Endothelial cell of umbilical vein (primary cell): ENCODE measurements at regions of chr6 and their contacts with region 1.

Region 1: GRCh38 chr6:73675466-73676098 is 20.4 kb upstream of the CD109 start:
- DNase-seq: peak; percentile 85
- H3K4me3 ChIP-seq: no peak overlapping the region
- H3K27ac ChIP-seq: no peak overlapping the region
- H3K4me1 ChIP-seq: peaks cover 3% of the 10 kb centered on the region
- H3K27me3 ChIP-seq: no peaks in the 10 kb centered on the region
- CTCF ChIP-seq: peak; percentile 82 to 84
- POLR2A ChIP-seq: no peak

Region 2: DNA sequence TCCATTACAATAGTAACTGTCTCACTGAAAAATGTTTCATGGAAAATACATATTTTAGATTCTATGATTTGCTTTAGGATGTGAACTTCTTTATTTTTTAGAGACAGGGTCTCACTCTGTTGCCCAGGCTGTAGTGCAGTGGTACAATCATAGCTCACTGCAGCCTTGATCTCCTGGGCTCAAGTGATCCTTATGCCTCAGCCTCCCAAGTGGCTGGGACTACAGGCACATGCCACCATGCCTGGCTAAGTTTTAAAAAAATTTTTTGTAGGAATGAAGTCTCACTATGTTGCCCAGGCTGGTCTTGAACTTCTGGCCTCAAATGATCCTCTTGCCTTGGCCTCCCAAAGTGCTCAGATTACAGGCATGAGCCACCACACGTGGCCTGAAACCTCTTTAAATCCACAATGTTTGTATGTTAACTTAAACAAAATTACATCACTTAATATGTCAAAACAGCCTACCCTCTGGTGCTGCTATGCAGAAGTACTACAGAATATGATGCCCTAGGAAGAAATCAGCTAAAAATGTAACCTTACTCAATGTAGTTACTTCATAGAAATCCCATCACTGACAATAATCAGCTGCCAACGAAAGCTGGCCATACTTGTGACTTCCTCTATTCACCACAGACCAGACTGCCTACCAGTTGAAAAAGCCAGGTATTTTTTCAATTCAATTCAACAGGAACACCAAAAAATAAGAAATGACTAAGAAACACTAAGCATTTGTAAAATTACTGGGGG is 172.4 kb before region 1 on chr6:
- CTCF ChIA-PET with region 1: no interaction called
- POLR2A ChIA-PET with region 1: no interaction called
- dilution Hi-C with region 1: no loop called
- intact Hi-C with region 1: no loop called
- DNase-seq: no peak
- H3K4me3 ChIP-seq: no peak overlapping the region
- H3K27ac ChIP-seq: no peak overlapping the region
- H3K4me1 ChIP-seq: no peaks in the 10 kb centered on the region
- H3K27me3 ChIP-seq: no peaks in the 10 kb centered on the region
- CTCF ChIP-seq: no peak
- POLR2A ChIP-seq: no peak

Region 3: DNA sequence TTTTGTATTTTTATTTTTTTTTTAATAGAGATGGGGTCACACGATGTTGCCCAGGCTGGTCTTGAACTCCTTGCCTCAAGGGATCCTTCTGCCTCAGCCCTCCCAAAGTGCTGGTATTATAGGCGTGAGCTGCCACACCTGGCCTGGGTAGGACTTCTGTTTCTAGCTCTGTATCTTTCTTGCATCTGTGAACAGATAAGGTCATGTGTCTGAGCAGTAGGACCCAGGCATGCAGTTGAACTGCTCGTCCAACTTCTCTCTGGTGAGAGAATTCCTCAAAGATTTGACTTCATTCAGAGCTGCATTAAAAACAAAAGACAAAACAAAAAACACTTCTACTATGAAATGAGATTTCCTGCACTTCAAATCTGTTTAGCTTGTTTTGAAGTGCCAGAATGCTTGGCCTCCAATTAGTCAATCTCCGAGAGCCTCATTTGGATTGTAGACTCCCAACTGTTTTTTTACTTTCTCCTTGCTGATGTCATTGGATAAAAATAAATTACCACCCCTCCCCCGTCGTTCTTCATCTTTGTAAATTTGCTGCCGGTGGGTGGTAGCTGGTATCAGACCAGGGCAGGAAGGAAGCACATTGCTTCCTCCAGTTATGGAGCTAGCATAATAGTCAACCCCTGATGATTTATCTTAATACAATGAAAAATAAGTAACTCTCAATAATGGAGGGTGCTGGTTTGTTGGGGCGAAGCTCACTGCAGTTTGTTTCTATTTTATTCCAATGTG is 38.0 kb after region 1 on chr6:
- CTCF ChIA-PET with region 1: interaction called, 13 read pairs
- POLR2A ChIA-PET with region 1: no interaction called
- dilution Hi-C with region 1: no loop called
- intact Hi-C with region 1: loop called (anchors 1 kb)
- DNase-seq: peak; percentile 98
- H3K4me3 ChIP-seq: peak overlapping the region in 1 of 3 experiments; percentile 30
- H3K27ac ChIP-seq: peak overlapping the region; percentile 95
- H3K4me1 ChIP-seq: peaks cover 35% of the 10 kb centered on the region
- H3K27me3 ChIP-seq: no peaks in the 10 kb centered on the region
- CTCF ChIP-seq: no peak
- POLR2A ChIP-seq: peak; percentile 60

Region 4: DNA sequence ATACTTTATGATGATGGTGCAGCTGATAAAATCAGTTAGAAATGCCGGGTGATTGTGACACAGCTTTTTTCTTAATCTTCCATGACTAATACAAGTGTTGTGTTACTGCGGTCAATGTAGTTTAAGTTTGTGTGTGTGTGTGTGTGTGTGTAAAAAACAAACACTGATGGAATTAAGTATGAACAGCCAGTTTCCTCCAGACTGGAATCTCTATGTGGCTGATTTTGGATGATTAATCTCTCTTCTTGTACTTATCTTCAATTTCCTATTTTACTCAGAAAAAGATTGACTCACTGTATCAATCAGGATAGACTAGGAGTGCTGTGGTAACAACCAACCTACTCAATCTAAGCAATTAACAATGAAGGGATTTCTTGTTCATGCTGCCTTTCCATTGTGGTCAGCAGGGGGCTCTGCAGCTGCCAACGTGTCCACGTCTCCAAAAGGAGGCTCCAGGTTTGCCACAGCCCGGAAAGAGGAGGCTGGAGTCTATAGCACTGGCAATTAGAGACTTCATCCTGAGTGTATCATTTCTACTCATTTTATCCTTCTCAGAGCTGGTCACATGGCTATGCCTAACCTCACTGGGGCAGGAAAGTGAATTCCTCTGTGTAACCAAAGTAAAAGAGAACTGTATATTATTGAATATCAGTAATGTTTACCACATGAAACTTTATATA is 128.1 kb after region 1 on chr6:
- CTCF ChIA-PET with region 1: no interaction called
- POLR2A ChIA-PET with region 1: no interaction called
- dilution Hi-C with region 1: no loop called
- intact Hi-C with region 1: no loop called
- DNase-seq: peak; percentile 72
- H3K4me3 ChIP-seq: no peak overlapping the region
- H3K27ac ChIP-seq: peak overlapping the region; percentile 81
- H3K4me1 ChIP-seq: peaks cover 18% of the 10 kb centered on the region
- H3K27me3 ChIP-seq: no peaks in the 10 kb centered on the region
- CTCF ChIP-seq: peak; percentile 57 to 64
- POLR2A ChIP-seq: no peak